RWPE1 (cell line): ENCODE measurements at regions of chr5 and their contacts with region 1.

Region 1: DNA sequence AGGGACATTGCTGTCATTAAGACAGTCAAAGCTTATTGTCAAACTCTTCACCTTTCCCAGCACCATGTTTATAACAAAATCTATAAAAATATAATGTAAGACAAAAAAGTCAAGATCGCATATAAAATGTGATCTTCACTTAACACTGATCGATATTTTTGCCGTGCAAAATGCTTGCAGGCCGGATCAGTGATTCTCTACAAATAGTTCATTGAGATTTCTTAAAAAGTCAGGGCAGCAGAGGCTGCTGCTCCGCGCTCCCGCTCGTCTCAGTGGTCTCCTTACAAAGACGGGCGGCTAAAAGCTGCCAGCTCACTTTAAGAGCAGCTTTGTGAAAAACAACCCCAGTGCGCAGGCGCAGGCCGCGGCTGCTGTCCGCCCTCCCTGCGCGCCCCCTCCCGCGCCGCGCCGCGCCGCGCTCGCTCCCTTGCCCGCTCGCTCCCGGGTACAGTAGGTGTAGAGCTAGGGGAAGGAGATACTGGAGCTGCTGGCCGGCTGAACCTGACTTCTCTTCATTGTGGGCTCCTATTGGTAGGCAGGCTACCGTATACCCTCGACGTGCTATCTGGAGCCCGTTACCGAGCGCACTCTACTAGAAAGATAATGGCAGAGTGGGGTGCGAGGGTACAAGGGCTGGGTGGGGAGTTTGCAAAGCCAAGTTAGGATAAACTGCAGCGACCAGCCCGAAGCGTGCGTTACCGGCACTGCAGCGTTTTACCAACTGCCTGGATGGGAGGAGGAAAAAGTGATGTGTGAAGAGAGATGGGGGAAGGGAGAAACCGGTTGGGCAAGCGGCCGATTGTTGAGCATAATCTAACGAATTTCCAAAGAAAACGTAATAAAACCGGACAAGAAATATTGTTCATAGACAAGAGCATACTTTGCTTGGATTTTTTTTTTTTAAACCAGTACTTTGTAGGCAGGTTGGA is at the start of gene ARRDC3:
- DNase-seq: peak; percentile 97
- H3K27ac ChIP-seq: peak within 1 kb of the TSS; percentile 98
- CTCF ChIP-seq: no peak

Region 2: GRCh38 chr5:90932052-90932699 is 451.1 kb before region 1 on chr5:
- CTCF ChIA-PET with region 1: interaction called, 17 read pairs
- POLR2A ChIA-PET with region 1: interaction called, 4 read pairs
- DNase-seq: peak; percentile 50
- H3K27ac ChIP-seq: no peak overlapping the region
- CTCF ChIP-seq: peak; percentile 74

Region 3: GRCh38 chr5:91101600-91102379 is 281.5 kb before region 1 on chr5:
- CTCF ChIA-PET with region 1: interaction called, 22 read pairs
- POLR2A ChIA-PET with region 1: interaction called, 3 read pairs
- DNase-seq: peak; percentile 88
- H3K27ac ChIP-seq: no peak overlapping the region
- CTCF ChIP-seq: peak; percentile 84

Region 4: GRCh38 chr5:91178461-91178860 is 204.8 kb before region 1 on chr5:
- CTCF ChIA-PET with region 1: no interaction called
- POLR2A ChIA-PET with region 1: no interaction called
- DNase-seq: no peak
- H3K27ac ChIP-seq: no peak overlapping the region
- CTCF ChIP-seq: no peak

Region 5: DNA sequence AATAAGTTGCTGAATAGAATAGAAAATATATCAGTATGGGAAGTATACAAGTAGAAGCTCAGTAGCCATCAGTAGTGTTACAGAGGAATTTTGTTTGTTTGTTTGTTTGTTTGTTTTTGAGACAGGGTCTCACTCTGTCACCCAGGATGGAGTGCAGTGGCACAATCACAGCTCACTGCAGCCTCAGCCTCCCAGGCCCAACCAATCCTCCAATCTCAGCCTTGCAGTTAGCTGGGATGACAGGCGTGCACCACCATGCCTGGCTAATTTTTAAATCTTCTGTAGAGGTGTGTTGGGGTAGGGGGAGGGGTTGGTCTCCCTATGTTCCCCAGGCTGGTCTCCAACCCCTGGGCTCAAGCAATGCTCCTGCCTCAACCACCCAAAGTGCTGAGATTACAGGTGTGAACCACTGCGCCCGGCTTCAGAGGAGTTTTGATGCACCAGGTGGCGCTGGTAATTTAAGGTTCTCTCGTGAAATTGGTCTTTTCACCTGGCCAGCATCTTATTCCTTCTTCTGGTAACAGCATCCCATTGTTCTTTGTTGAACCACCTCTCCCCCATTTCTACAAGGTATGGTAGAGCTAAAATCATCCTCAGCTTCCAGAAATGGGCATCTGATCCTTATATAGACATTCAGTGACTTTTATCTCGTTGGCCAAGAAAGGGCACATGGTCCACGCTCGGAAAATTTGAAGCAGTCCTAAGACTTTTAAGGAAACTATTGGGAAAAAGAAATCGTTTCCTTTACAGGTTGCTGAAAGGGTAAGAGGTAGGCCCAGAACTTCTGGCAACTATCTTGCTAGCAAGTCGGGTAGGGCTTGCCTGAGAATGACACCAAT is 157.2 kb before region 1 on chr5:
- CTCF ChIA-PET with region 1: interaction called, 39 read pairs
- POLR2A ChIA-PET with region 1: interaction called, 3 read pairs
- DNase-seq: peak; percentile 58
- H3K27ac ChIP-seq: no peak overlapping the region
- CTCF ChIP-seq: peak; percentile 67

Region 6: DNA sequence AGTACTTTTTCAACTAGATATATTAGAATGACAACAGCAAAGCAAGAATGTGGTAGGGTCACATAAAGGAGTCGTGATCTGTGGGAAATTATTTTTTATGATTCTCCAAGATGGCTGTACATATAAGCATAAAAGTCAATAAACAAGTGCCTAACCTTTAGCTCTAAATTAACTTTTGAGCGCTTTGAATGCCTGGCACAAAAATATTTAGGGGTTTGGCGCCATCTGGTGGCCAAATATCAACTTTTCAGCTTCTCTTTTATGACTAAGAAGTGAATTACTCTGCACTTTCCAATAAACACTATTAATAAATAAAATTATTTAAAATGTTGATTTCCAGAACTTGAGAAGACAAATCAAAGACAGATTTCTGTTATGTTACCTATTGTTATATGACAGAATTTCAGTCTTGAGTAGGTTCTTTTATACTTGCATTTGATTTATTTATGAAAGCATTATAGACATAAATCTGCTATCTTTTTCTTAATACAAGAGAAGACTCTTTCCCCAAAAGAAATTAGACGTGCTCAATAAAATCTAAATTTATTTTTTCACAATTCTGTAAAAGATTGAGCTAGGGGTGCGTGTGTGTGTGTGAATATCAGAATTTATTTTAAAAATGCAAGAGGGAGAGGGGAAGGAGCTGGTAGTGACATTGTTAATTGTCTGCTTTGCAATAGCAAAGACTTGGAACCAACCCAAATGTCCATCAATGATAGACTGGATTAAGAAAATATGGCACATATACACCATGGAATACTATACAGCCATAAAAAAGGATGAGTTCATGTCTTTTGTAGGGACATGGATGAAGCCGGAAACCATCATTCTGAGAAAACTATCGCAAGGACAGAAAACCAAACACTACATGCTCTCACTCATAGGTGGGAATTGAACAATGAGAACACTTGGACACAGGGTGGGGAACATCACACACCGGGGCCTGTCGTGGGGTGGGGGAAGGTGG is 36.6 kb after region 1 on chr5:
- CTCF ChIA-PET with region 1: interaction called, 17 read pairs
- POLR2A ChIA-PET with region 1: no interaction called
- DNase-seq: peak; percentile 36
- H3K27ac ChIP-seq: no peak overlapping the region
- CTCF ChIP-seq: peak; percentile 71